Activated T-helper 2 cell treated with anti-CD3 and anti-CD28 coated beads, Interferon-gamma antibody, Interleukin-2, Interleukin-4, amounts not matched to agents 10 μg/mL and 5 μg/mL and 100 μg/mL, durations not matched to agents 14 hours and 24 hours and 36 hours (primary cell): ENCODE measurements at regions of chr12 and their contacts with region 1.

Region 1: GRCh38 chr12:2877047-2877952 is at the starts of genes FOXM1 and RHNO1:
- DNase-seq: peak; percentile 87
- H3K4me3 Mint-ChIP-seq: peak within 1 kb of the TSS; percentile 95
- H3K27ac Mint-ChIP-seq: peak within 1 kb of the TSS; percentile 98
- H3K4me1 Mint-ChIP-seq: peaks cover 34% of the 10 kb centered on the region
- H3K27me3 Mint-ChIP-seq: no peaks in the 10 kb centered on the region
- total RNA-seq, gene FOXM1: 74.8 and 79.3 TPM in 2 replicates
- total RNA-seq, gene RHNO1: 46.5 and 51.1 TPM in 2 replicates

Region 2: GRCh38 chr12:2691006-2691344 is 186.3 kb before region 1 on chr12:
- intact Hi-C with region 1: loop called (anchors 10 kb)
- DNase-seq: peak; percentile 59
- H3K4me3 Mint-ChIP-seq: peak overlapping the region; percentile 81
- H3K27ac Mint-ChIP-seq: peak overlapping the region; percentile 87
- H3K4me1 Mint-ChIP-seq: peaks cover 32% of the 10 kb centered on the region
- H3K27me3 Mint-ChIP-seq: peaks cover 4% of the 10 kb centered on the region

Region 3: DNA sequence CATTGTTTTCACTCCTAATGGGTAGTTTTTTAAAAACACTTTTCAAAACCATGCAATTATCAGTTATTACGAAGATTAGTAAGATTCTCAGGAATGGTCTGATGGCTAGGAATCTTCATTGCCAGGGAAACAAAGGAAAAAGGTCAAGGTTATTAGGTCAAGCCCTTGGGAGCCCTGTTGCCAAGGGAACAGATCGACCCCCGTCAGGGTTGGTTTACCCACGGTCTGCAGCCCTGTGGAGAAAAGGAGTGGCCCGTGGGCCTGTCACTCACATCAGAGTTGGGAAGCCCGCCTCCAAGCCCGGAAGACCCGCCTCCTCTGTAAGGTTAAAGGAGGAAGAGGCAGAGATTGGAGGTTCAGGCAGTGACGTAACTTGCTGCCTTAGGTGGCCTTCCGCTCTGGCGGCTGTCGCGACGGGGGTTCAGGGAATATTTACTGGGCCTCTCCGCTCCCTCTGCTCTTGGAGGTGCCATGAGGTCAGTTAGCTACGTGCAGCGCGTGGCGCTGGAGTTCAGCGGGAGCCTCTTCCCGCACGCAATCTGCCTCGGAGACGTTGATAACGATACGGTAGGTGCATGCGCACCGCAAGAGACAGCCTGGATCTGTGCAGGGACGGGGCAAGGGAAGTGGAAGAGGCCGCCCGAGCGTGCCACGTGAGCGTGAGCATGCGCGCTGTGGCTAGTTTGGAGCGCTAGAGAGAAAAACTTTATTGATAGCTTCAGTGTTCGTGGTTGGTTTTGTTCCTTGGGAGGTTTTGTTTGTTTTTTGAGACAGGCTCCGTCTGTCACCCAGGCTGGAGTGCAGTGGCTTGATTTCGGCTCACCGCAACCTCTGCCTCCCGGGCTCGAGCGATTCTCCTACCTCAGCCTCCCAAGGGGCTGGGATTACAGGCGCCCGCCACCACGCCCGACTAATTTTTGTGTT is 64.7 kb before region 1 on chr12 and contains the start of gene ITFG2:
- intact Hi-C with region 1: loop called (anchors 1 kb)
- DNase-seq: peak; percentile 95
- H3K4me3 Mint-ChIP-seq: peak within 1 kb of the TSS; percentile 100
- H3K27ac Mint-ChIP-seq: peak within 1 kb of the TSS; percentile 100
- H3K4me1 Mint-ChIP-seq: peaks cover 13% of the 10 kb centered on the region
- H3K27me3 Mint-ChIP-seq: no peaks in the 10 kb centered on the region
- total RNA-seq, gene ITFG2: 43.4 and 46.4 TPM in 2 replicates

Region 4: DNA sequence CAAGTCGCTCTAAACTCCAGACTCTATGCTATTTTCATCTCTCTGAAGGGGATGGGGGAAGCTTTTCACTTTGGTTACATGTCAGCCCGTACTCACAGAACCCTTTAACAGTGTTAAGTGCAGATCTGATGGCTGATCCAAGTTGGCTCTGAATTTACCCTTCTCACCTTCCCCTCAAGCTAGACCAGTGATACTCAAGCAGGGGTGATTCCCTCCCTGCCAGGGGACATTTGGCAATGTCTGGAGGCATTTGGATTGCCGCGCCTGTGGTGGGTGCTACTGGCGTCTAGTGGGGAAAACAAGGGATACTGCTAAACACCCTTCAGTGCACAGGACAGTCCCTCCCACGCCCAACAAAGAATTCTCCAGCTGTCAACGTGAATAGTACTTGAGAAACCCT is 14.4 kb before region 1 on chr12:
- intact Hi-C with region 1: loop called (anchors 1 kb)
- DNase-seq: no peak
- H3K4me3 Mint-ChIP-seq: no peak overlapping the region
- H3K27ac Mint-ChIP-seq: no peak overlapping the region
- H3K4me1 Mint-ChIP-seq: peaks cover 4% of the 10 kb centered on the region
- H3K27me3 Mint-ChIP-seq: no peaks in the 10 kb centered on the region

Region 5: GRCh38 chr12:2890388-2891239 is 13.3 kb after region 1 on chr12 and contains the start of gene TULP3:
- intact Hi-C with region 1: loop called (anchors 1 kb)
- DNase-seq: peak; percentile 96
- H3K4me3 Mint-ChIP-seq: peak within 1 kb of the TSS; percentile 93
- H3K27ac Mint-ChIP-seq: peak within 1 kb of the TSS; percentile 93
- H3K4me1 Mint-ChIP-seq: peaks cover 25% of the 10 kb centered on the region
- H3K27me3 Mint-ChIP-seq: no peaks in the 10 kb centered on the region
- total RNA-seq, gene TULP3: 6.0 and 6.4 TPM in 2 replicates

Region 6: DNA sequence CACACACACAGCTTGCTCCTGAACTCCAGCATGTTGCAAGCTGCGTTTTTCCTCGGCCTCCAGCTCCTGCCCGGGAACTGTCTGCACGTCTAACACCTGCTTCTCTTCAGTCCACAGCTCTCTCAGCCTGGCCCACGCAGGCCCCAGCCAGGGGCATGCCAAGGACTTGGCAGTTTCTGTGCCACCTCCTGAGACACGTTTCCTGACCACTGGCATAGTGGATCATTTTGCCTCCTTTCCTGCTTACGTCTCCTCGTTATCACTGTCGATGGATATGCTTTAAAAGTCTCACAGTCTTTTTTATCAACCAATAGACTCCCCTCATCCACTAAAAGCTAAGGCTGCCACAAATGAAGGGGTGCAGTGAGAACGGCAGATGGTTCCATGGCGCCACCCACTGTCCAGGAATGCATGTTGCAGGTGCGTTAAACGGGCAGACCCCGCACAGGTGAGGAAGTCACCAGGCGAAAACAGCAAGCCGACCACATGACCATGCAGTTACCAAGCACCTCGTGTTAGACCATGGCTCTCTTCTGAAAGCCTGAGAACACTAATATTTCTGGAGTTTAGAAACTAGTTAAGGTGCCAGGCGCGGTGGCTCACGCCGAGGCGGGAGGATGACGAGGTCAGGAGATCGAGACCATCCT is 67.2 kb after region 1 on chr12:
- intact Hi-C with region 1: loop called (anchors 10 kb)
- DNase-seq: peak; percentile 31
- H3K4me3 Mint-ChIP-seq: no peak overlapping the region
- H3K27ac Mint-ChIP-seq: no peak overlapping the region
- H3K4me1 Mint-ChIP-seq: no peaks in the 10 kb centered on the region
- H3K27me3 Mint-ChIP-seq: peaks cover 2% of the 10 kb centered on the region